ENCODE measurements at regions of chr16 and their contacts with region 1.

Region 1: GRCh38 chr16:22203091-22203490 is 3.0 kb upstream of the EEF2K start:
- DNase-seq: no peak
- H3K4me3 ChIP-seq: no peak overlapping the region
- H3K27ac ChIP-seq: no peak overlapping the region
- H3K4me1 ChIP-seq: peaks cover 12 to 44% (median 32%) of the 10 kb centered on the region in 4 donors
- H3K27me3 ChIP-seq: no peaks in the 10 kb centered on the region
- CTCF ChIP-seq: no peak
- EP300 ChIP-seq: no peak
- POLR2A ChIP-seq: no peak

Region 2: DNA sequence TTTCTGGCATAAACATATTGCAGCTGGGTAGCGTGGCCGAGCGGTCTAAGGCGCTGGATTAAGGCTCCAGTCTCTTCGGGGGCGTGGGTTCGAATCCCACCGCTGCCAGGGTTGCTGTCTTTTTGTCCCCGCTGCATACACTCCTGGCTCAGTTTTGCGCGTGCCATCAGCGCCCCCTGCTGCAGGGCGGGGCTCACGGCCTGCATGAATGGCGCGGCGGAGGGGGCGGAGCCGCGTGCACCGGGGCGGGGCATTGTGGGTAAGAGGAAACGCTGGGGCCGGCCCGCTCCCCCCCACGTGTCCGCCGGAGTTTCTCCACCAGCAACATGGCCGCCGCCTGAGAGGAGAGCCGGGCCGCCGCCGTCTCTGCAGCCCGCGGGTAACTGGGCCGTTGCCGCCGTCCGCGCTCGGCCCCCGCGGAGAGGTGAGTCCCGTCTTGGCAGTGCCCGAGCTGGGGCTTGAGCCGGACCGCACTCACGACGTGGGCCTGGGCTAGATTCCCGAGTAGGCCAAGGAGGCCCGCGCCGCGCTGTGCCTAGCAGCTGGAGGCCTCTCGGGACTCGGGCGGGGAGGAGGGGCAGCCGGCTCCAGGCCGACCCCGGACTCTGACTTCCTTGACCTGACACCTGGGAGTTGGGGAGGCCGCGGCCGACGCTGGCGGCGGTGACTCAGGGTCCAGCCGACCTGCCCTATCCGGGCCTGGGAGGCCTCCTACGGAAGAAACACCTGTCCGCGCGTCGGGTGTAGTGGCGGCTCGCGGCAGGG is 94.2 kb after region 1 on chr16 and contains the start of gene POLR3E:
- intact Hi-C with region 1: loop called (anchors 5 kb)
- DNase-seq: peak; percentile 100
- H3K4me3 ChIP-seq: peak within 1 kb of the TSS; percentile 79 to 98 (median 82)
- H3K27ac ChIP-seq: peak within 1 kb of the TSS; percentile 93 to 98 (median 96)
- H3K4me1 ChIP-seq: peaks cover 18 to 46% (median 35%) of the 10 kb centered on the region in 4 donors
- H3K27me3 ChIP-seq: no peaks in the 10 kb centered on the region
- CTCF ChIP-seq: peak in 6 of 7 experiments; percentile 36 to 99 (median 89)
- EP300 ChIP-seq: no peak
- POLR2A ChIP-seq: no peak
- total RNA-seq, gene POLR3E: 51.3 to 99.1 (median 76.5) TPM

Measured in stomach (tissue), 19 donors.